ENCODE measurements at regions of chr9 and their contacts with region 1.

Region 1: GRCh38 chr9:34637356-34638137 is at the start of gene SIGMAR1:
- DNase-seq: peak; percentile 91
- H3K4me3 ChIP-seq: peak within 1 kb of the TSS; percentile 10 to 63 (median 47)
- H3K27ac ChIP-seq: peak within 1 kb of the TSS; percentile 33
- H3K4me1 ChIP-seq: peaks cover 16% of the 10 kb centered on the region
- H3K27me3 ChIP-seq: no peaks in the 10 kb centered on the region
- CTCF ChIP-seq: no peak
- POLR2A ChIP-seq: peak; percentile 81
- total RNA-seq, gene SIGMAR1: 74.1 and 81.2 TPM in 2 replicates

Region 2: DNA sequence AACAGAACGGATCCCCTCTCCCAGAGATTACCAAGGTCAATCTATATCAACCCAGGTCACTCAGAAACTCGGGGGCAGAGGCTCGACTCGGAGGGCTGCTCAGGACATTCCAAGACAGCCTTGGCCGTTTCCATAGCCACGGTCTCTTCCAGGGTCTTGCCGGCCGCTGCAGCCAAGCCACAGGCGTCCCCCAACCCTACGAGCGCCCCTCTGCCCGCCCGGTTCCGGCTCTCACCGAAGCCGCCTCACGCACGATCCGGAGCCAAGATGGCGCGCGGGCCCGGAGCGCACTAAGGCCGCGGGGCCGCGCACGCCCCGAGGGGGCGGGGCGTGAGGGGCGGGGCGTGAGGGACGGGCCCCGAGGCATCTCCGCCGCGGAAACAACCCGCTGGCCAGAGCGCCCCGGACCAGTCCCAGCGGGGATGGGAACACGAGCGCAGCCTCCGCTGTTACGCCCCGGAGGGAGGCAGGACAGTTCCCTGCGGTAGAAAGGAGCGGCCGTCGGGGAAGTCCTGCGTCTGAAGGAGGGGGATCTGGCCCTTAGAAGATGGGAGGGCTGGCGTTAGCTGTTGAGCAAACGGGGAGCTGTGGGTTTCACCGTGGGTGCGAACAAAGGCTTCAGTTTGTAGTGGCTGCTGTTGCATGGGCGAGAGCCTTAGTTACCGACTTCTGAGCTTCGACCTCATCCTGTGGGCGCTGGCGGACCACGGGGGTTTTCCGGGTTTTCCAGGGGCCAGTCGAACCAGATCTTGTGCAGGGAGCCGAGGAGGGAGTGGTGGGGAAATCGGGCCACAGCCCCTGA is 25.5 kb before region 1 on chr9 and contains the start of gene RPP25L:
- CTCF ChIA-PET with region 1: interaction called, 130 read pairs
- POLR2A ChIA-PET with region 1: interaction called, 3 read pairs
- dilution Hi-C with region 1: no loop called
- intact Hi-C with region 1: loop called (anchors 1 kb)
- DNase-seq: peak; percentile 83
- H3K4me3 ChIP-seq: peak within 1 kb of the TSS; percentile 41 to 79 (median 77)
- H3K27ac ChIP-seq: peak within 1 kb of the TSS; percentile 72
- H3K4me1 ChIP-seq: peaks cover 13% of the 10 kb centered on the region
- H3K27me3 ChIP-seq: no peaks in the 10 kb centered on the region
- CTCF ChIP-seq: no peak
- POLR2A ChIP-seq: peak; percentile 87
- total RNA-seq, gene RPP25L: 15.1 and 15.7 TPM in 2 replicates

Region 3: DNA sequence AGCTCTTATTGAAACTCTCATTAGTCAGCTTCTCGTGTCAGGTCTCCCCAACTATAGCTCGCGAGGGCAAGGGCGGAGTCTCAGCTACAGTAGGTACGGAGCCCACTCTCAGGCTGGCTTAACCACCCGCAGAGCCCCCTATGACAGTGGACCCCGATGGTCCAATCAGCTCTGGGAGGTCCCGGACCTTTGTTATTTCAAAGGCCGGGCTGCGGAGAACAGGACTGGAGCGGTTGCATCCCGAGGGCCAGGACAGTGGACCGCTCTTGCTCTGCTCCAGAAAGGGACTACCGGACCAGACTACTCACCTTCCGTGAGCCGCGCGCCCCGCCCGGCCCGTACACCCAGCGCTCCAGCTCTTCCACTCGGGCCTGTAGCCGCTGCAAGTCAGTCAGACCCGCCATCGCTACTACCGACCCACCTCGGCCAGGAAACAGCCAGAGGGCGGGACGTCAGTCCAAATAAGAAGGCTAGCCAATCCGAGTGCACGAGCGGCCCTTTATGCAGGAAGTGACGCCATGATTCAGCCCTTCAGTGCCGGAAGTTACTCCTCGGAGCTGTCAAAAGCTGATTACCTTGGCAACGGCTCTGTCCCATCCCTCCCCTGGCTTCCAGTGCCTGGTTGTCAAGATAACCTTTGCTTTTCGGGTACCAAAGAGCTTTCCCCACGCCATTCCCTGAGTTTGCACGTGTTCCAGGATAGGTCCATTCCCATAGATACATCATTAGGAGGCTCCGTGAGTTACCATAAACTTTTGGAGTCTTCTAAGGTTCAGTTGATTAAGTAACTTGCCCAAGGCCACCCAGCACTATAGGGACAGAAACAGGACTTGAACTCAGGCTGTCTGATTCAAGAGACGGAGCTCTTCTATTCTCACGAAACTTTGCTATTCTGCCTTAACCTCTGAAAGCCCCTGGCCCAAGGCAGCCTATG is 17.2 kb before region 1 on chr9 and contains the start of gene DCTN3:
- CTCF ChIA-PET with region 1: interaction called, 130 read pairs
- POLR2A ChIA-PET with region 1: interaction called, 5 read pairs
- dilution Hi-C with region 1: no loop called
- intact Hi-C with region 1: no loop called
- DNase-seq: peak; percentile 91
- H3K4me3 ChIP-seq: peak within 1 kb of the TSS; percentile 68 to 78 (median 70)
- H3K27ac ChIP-seq: no peak within 1 kb of the TSS
- H3K4me1 ChIP-seq: peaks cover 10% of the 10 kb centered on the region
- H3K27me3 ChIP-seq: peaks cover 20 to 24% of the 10 kb centered on the region in 2 experiments
- CTCF ChIP-seq: no peak
- POLR2A ChIP-seq: peak; percentile 55
- total RNA-seq, gene DCTN3: 91.0 and 93.3 TPM in 2 replicates

Region 4: DNA sequence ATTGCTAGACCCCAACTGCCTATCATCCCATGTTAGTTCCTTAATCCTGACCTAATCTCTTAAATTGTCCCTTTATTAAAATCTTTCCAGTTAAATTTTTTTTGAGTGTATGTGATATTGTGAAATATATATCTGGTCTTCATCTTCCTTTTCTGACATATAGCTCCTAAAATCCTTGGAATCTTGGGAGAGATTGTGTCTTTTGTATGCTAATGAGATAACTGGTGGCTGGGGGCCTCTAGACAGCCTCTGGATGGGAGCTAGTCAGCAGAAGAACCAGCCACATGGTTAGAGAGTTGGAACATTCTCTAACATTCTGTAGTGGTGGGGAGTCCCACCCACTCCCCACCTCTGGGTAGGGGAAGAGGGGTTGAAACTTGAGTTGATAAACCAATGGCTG is 57.3 kb after region 1 on chr9:
- CTCF ChIA-PET with region 1: no interaction called
- POLR2A ChIA-PET with region 1: no interaction called
- dilution Hi-C with region 1: no loop called
- intact Hi-C with region 1: no loop called
- DNase-seq: no peak
- H3K4me3 ChIP-seq: no peak overlapping the region
- H3K27ac ChIP-seq: no peak overlapping the region
- H3K4me1 ChIP-seq: no peaks in the 10 kb centered on the region
- H3K27me3 ChIP-seq: peaks cover 10 to 18% of the 10 kb centered on the region in 2 experiments
- CTCF ChIP-seq: no peak
- POLR2A ChIP-seq: no peak

Measured in endothelial cell of umbilical vein (primary cell).